ENCODE measurements at regions of chr14 and their contacts with region 1.

Region 1: GRCh38 chr14:39014460-39014859 is 88.6 kb downstream of the SEC23A start:
- DNase-seq: no peak

Region 2: GRCh38 chr14:37889087-37889486 is 1125.4 kb before region 1 on chr14:
- intact Hi-C with region 1: loop called in 1 of 2 experiments (anchors 5 kb)
- DNase-seq: no peak

Region 3: DNA sequence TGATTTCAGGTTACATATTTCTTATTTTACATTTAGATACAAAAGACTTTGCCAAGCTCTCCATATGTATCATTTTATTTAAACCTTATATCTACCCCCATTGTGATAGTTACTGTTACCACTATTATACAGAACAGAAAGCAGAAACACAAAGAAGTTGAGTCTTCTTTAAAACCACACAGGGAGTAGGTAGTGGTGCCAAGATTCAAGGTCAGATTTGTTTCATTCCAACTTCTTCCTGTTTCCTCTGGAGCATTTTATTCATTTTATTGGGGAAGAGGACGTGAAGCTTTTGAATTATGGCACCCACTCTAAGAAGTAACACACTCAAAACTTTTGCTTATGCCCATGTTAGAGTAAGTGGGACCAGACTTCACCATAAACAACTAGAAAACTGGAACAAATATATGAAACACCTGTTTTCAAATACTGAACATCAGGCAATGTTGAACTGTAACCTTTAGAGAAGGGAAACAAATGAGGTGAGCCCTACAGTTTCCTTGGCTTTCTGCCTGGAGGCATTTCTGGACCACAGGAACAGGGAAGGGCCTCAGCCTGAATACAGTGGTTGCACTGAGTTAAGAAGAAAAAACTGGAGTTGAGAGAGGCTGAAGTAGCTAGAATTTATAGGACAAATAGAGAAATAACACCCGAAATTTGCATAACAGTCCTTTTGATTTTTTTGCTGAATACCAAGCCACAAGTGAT is 967.1 kb before region 1 on chr14:
- intact Hi-C with region 1: no loop called
- DNase-seq: no peak

Region 4: GRCh38 chr14:39310051-39310450 is 295.6 kb after region 1 on chr14:
- intact Hi-C with region 1: no loop called
- DNase-seq: no peak